ENCODE measurements at regions of chr22 and their contacts with region 1.

Region 1: DNA sequence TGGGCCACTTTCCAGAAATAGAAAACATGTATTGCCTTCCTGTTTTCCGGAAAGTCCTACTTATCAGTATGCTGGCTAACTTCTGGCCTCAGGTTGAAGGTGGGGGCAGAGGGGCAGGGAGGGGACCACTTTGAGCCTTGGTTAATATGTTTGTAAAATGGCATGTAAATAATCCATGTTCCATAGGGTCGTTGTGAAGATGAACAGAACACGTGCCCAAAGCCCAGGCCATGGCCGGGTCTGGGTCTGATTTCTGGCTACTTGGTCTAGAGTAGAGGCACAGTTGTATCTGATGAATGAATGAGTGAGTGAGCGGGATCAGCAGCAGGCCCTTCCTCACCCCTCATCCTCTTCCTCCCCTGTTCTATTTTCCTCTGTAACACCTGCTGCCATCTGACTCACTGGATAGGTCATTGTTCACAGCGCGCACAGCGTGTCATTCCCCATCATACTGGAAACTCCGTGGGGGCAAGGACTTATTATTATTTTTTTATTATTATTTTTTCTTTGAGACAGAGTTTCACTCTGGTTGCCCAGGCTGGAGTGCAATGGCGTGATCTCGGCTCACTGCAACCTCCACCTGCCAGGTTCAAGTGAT is 13.8 kb downstream of the NCF4 start:
- DNase-seq: no peak
- H3K4me3 ChIP-seq: no peak overlapping the region
- CTCF ChIP-seq: no peak
- POLR2A ChIP-seq: no peak

Region 2: DNA sequence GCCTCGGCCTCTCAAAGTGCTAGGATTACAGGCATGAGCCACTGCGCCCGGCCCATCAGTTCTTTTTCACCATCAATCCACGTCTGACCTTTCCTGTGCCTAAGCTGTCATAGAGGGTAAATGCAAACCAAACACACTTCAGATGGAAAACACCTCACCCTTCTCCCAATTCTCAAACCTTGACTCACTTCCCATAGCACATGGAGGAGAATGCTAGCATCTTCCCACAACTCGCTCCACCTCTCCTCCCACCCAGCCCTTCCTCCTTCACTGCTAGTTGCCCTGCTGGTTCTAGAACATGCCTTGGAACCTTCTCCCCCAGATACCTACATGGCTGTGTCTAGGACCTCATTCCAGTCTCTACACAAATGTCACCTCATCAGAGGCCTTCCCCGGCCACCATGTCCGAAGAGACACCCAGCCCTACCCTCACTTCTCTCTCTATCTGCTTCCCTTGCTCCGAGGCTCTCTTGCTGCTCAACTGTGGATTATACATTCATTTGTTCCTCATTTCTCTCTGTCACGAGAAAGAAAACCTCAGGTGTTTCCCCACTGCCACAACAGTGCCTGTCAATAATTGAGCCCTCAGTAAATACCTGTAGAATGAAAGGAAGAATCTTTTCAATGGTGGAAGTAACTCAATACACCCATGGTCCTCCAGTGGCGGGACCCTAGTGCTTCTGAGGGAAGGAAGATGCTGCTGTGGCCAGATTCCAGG is 35.1 kb before region 1 on chr22:
- intact Hi-C with region 1: loop called (anchors 1 kb)
- DNase-seq: no peak
- H3K4me3 ChIP-seq: no peak overlapping the region
- CTCF ChIP-seq: no peak
- POLR2A ChIP-seq: no peak